Esophagus squamous epithelium (tissue), 5 donors: ENCODE measurements at regions of chr11 and their contacts with region 1.

Region 1: GRCh38 chr11:120801801-120802689 is 221.9 kb upstream of the TBCEL start:
- DNase-seq: no peak
- H3K4me3 ChIP-seq: no peak overlapping the region
- H3K27ac ChIP-seq: no peak overlapping the region
- H3K4me1 ChIP-seq: no peaks in the 10 kb centered on the region
- H3K27me3 ChIP-seq: peaks cover 0 to 9% (median 0%) of the 10 kb centered on the region in 4 donors
- CTCF ChIP-seq: peak; percentile 70 to 94 (median 86)
- POLR2A ChIP-seq: no peak

Region 2: GRCh38 chr11:120272303-120272702 is 529.7 kb before region 1 on chr11:
- intact Hi-C with region 1: no loop called
- DNase-seq: no peak
- H3K4me3 ChIP-seq: no peak overlapping the region
- H3K27ac ChIP-seq: peak overlapping the region; percentile 57 to 83 (median 72)
- H3K4me1 ChIP-seq: peaks cover 6 to 23% (median 8%) of the 10 kb centered on the region in 3 donors
- H3K27me3 ChIP-seq: peaks cover 0 to 18% (median 0%) of the 10 kb centered on the region in 4 donors
- CTCF ChIP-seq: no peak
- POLR2A ChIP-seq: no peak

Region 3: GRCh38 chr11:120527111-120527761 is 274.8 kb before region 1 on chr11:
- intact Hi-C with region 1: loop called (anchors 10 kb)
- DNase-seq: no peak
- H3K4me3 ChIP-seq: no peak overlapping the region
- H3K27ac ChIP-seq: no peak overlapping the region
- H3K4me1 ChIP-seq: peaks cover 0 to 13% (median 5%) of the 10 kb centered on the region in 3 donors
- H3K27me3 ChIP-seq: peaks cover 0 to 73% (median 0%) of the 10 kb centered on the region in 4 donors
- CTCF ChIP-seq: no peak
- POLR2A ChIP-seq: no peak

Region 4: GRCh38 chr11:120932305-120932915 is 130.4 kb after region 1 on chr11:
- intact Hi-C with region 1: no loop called
- DNase-seq: no peak
- H3K4me3 ChIP-seq: no peak overlapping the region
- H3K27ac ChIP-seq: no peak overlapping the region
- H3K4me1 ChIP-seq: no peaks in the 10 kb centered on the region
- H3K27me3 ChIP-seq: peaks cover 0 to 10% (median 0%) of the 10 kb centered on the region in 4 donors
- CTCF ChIP-seq: no peak
- POLR2A ChIP-seq: no peak